CD8-positive, alpha-beta memory T cell (primary cell): ENCODE measurements at regions of chr14 and their contacts with region 1.

Region 1: GRCh38 chr14:22723815-22724214 is 42.7 kb upstream of the OXA1L start:
- DNase-seq: no peak
- H3K4me3 ChIP-seq: no peak overlapping the region
- H3K4me3 Mint-ChIP-seq: no peak overlapping the region
- H3K27ac ChIP-seq: no peak overlapping the region
- H3K27ac Mint-ChIP-seq: no peak overlapping the region
- H3K4me1 ChIP-seq: no peaks in the 10 kb centered on the region
- H3K4me1 Mint-ChIP-seq: no peaks in the 10 kb centered on the region
- H3K27me3 ChIP-seq: no peaks in the 10 kb centered on the region
- H3K27me3 Mint-ChIP-seq: peaks cover 0 to 5% of the 10 kb centered on the region in 2 donors

Region 2: DNA sequence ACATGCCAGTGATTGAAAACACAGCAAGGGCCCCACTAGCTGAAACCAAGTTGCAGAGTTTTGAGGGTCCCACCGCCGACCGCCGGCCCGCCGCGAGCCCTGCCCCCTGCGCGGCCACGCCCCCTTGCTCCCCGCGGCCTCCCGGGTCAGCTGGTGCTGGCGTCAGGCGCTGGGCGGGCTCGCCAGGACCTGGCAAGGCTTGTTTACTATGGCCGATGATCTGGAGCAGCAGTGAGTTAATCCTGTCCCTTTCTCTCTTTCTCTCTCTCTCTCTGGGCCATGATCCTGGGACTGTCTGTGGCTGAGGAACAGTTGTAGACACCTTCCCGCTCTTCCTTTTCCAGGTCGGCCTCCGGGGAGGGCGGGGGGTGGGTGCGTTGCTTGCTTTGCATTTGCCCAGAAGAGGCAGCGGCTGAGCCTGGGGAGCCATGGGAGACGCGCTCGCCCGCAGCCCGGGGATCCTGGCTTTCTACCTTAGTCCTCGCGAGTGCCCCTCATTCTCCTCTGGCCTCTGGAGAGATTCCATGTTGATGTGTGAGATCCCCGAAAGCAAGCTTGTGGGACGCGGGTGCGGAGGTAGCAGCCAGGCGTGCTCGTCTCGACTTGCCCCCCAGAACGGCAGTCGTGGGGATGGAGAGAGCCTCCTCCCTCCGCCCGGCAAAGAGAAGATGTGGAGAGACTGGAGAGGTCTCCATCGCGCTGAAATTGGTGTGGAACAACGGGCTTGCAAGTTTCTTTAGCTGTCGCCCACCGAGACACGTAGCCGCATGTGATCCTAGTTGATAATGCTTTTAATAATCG is 125.5 kb before region 1 on chr14 and contains the start of gene ABHD4:
- CTCF ChIA-PET with region 1: no interaction called
- POLR2A ChIA-PET with region 1: interaction called, 10 read pairs
- DNase-seq: peak; percentile 59 to 74 (median 63)
- H3K4me3 ChIP-seq: peak within 1 kb of the TSS; percentile 90
- H3K4me3 Mint-ChIP-seq: peak within 1 kb of the TSS; percentile 93 to 98 (median 96)
- H3K27ac ChIP-seq: peak within 1 kb of the TSS; percentile 74
- H3K27ac Mint-ChIP-seq: peak within 1 kb of the TSS; percentile 69 to 97 (median 94)
- H3K4me1 ChIP-seq: peaks cover 10% of the 10 kb centered on the region
- H3K4me1 Mint-ChIP-seq: peaks cover 26 to 43% (median 36%) of the 10 kb centered on the region in 3 donors
- H3K27me3 ChIP-seq: no peaks in the 10 kb centered on the region
- H3K27me3 Mint-ChIP-seq: peaks cover 0 to 3% of the 10 kb centered on the region in 2 donors
- total RNA-seq, gene ABHD4: 8.4 to 11.4 TPM

Region 3: DNA sequence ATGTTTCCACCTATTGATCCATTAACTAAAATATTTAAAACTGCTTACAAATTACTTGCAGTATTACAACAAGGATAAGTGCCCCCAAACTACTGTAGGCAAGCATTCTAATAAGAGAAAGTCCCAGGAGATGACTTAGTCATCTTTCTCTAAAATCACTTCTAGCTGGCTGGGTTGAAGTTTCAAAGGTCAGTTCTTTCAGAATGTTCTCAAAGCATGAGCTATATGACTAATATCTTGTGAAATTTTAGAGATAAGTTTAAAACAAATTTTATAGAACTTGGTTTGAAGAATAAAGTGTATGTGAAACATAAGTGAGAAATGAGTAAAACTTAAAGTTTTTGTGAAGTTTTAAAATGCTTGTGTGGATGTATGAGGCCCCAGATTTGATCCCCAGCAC is 55.4 kb before region 1 on chr14:
- CTCF ChIA-PET with region 1: no interaction called
- POLR2A ChIA-PET with region 1: no interaction called
- DNase-seq: no peak
- H3K4me3 ChIP-seq: no peak overlapping the region
- H3K4me3 Mint-ChIP-seq: no peak overlapping the region
- H3K27ac ChIP-seq: no peak overlapping the region
- H3K27ac Mint-ChIP-seq: no peak overlapping the region
- H3K4me1 ChIP-seq: no peaks in the 10 kb centered on the region
- H3K4me1 Mint-ChIP-seq: no peaks in the 10 kb centered on the region
- H3K27me3 ChIP-seq: no peaks in the 10 kb centered on the region
- H3K27me3 Mint-ChIP-seq: peaks cover 0 to 3% of the 10 kb centered on the region in 2 donors

Region 4: DNA sequence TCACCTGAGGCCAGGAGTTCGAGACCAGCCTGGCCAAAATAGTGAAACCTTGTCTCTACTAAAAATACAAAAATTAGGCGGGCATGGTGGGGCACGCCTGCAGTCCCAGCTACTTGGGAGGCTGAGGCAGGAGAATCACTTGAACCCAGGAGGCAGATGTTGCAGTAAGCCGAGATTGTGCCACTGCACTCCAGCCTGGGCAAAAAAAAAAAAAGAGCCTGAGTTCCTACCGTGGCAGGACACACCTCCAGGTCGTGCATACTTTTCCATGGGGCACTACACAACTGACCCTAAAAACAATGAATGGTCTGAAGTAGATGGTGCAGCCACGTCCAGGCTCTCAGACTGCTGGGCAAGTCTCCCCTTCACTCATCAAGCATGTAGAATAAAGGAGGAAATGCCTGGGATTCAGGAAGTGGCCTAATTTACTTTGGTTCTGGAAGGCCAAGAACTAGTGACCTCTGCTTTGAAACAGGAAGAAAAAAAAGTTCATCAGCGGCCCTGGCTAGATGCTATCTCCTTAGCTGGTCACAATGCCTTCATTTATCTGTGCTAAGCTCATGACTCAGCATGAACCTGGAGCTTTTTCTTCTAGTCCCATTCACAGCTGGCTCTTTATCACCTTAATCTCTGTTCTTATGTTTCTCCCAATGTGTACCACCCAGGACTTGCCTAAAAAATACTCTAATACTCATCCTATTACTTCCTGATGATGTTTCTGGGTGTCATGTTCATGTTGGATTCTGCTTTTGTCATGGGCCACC is 23.8 kb before region 1 on chr14:
- CTCF ChIA-PET with region 1: no interaction called
- POLR2A ChIA-PET with region 1: no interaction called
- DNase-seq: no peak
- H3K4me3 ChIP-seq: no peak overlapping the region
- H3K4me3 Mint-ChIP-seq: no peak overlapping the region
- H3K27ac ChIP-seq: no peak overlapping the region
- H3K27ac Mint-ChIP-seq: no peak overlapping the region
- H3K4me1 ChIP-seq: no peaks in the 10 kb centered on the region
- H3K4me1 Mint-ChIP-seq: no peaks in the 10 kb centered on the region
- H3K27me3 ChIP-seq: no peaks in the 10 kb centered on the region
- H3K27me3 Mint-ChIP-seq: peaks cover 25 to 58% of the 10 kb centered on the region in 2 donors

Region 5: GRCh38 chr14:22737052-22737451 is 13.2 kb after region 1 on chr14:
- CTCF ChIA-PET with region 1: no interaction called
- POLR2A ChIA-PET with region 1: no interaction called
- DNase-seq: no peak
- H3K4me3 ChIP-seq: no peak overlapping the region
- H3K4me3 Mint-ChIP-seq: no peak overlapping the region
- H3K27ac ChIP-seq: no peak overlapping the region
- H3K27ac Mint-ChIP-seq: no peak overlapping the region
- H3K4me1 ChIP-seq: no peaks in the 10 kb centered on the region
- H3K4me1 Mint-ChIP-seq: no peaks in the 10 kb centered on the region
- H3K27me3 ChIP-seq: no peaks in the 10 kb centered on the region
- H3K27me3 Mint-ChIP-seq: peaks cover 2 to 18% of the 10 kb centered on the region in 2 donors